WTC11 (cell line): ENCODE measurements at regions of chr1 and their contacts with region 1.

Region 1: DNA sequence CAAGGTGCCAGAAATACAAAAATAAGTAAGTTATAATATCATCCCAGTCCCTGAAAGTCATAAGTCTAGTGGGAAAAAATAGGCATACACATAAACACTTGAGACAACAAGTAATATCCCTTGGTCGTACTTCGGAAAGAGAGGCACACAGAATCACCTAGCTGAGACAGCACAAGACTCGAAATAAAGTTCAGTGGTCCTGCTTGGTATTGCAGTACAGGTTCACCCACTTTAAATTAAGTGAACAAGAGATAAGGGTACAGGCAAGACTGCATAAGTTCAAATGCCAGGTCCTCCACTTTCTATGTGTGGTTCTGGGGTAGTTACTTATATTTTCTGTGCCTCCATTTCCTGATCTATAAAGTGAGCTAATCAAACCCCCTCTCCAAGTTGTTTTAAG is 47.6 kb downstream of the SEC16B start:
- DNase-seq: no peak
- ATAC-seq: peak; percentile 84
- H3K4me3 Mint-ChIP-seq: no peak overlapping the region
- H3K27ac Mint-ChIP-seq: no peak overlapping the region
- H3K4me1 Mint-ChIP-seq: peaks cover 12% of the 10 kb centered on the region
- H3K27me3 Mint-ChIP-seq: no peaks in the 10 kb centered on the region
- CTCF ChIP-seq: no peak

Region 2: DNA sequence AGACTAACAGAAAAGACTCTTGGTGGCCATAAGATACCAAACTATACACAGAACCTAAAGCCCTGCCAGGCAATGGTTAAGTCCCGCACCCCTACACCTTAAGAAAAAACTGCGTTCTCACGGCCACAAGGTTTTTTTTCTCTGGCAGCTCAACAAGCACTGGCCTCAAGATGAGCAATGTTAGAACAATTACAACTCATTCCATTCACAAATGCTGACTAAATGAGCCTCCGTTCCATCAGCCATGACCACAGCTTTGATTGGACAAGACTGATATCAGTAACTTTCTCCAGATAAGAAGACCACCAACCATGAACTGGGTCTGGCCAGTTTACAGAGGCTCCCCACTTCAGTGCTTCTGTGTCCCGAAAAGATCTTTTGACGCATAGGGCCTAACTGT is 15.7 kb after region 1 on chr1:
- CTCF ChIA-PET with region 1: interaction called, 14 read pairs
- POLR2A ChIA-PET with region 1: no interaction called
- DNase-seq: no peak
- ATAC-seq: no peak
- H3K4me3 Mint-ChIP-seq: no peak overlapping the region
- H3K27ac Mint-ChIP-seq: no peak overlapping the region
- H3K4me1 Mint-ChIP-seq: 0 out of 2 replicates have a peak, but pooled peaks cover 2% of the 10 kb centered on the region
- H3K27me3 Mint-ChIP-seq: no peaks in the 10 kb centered on the region
- CTCF ChIP-seq: no peak

Region 3: DNA sequence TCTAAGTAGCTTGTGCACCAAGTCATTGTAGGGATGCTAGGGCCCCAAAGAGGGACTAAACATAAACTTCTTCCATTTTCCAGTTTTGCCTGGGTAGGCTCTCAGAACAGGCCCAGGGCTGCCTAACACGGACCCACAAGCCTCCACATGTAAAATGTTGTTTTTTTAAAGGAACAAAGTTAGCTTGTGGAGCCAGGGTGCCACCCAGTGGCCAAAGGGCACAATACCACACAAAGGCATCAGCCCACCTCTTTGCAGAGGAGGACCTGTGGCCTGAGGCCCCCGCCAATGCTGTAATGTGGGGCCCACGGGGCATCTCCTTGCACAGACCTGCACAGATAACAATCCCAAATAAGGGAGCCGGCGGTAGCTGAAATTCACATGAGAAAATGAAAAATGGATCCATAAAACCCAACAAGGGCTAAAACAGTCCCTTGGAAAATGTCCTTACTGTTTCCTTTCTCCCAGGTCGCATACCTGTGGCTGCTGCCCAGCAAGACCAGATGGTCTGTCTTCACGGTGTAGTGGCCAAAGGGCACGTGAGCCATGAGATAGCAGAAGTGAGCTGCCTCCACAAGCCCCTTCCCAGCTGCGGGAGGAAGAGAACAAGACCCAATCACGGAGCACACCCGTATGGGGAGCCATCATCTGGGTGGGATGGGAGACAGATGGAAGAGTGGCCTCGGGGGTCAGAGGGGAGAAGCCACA is 23.9 kb after region 1 on chr1:
- CTCF ChIA-PET with region 1: interaction called, 11 read pairs
- POLR2A ChIA-PET with region 1: no interaction called
- DNase-seq: peak; percentile 82
- ATAC-seq: peak; percentile 86
- H3K4me3 Mint-ChIP-seq: no peak overlapping the region
- H3K27ac Mint-ChIP-seq: no peak overlapping the region
- H3K4me1 Mint-ChIP-seq: peaks cover 30% of the 10 kb centered on the region
- H3K27me3 Mint-ChIP-seq: no peaks in the 10 kb centered on the region
- CTCF ChIP-seq: peak; percentile 85